BJ (cell line): ENCODE measurements at regions of chr1 and their contacts with region 1.

Region 1: GRCh38 chr1:15100121-15100874 is 53.2 kb upstream of the TMEM51 start:
- DNase-seq: no peak
- H3K4me3 ChIP-seq: no peak overlapping the region
- H3K27me3 ChIP-seq: no peaks in the 10 kb centered on the region
- CTCF ChIP-seq: peak; percentile 90

Region 2: DNA sequence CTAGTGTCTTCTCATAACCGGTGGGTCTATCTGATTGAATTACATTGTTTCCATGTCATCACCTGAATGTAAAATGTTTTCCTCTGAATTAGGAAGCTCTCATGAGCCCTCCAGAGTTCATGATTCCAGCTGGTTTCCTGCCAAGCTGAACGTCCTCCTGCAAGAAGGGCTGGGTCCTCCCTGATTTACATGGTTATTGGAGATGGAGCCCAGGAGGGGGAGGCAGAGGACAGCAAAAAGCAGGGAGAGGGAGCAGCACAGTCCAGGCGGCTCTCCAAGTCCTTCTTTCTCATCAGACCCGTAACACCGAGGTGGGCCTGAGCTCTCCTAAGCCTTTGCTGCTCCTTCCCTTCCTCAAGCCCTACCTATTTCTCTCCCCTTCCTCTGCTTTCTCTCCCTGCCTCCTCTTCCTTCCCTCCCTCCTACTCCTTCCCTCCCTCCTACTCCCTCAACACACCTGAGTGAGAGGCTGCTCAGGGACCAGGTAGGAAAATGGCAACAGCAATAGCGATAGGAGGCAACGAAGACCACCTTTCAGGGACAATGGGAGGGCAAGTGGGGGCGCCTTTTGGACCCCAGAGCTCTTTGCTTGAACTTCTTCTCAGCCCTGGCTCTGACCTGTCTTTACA is 1134.4 kb before region 1 on chr1:
- CTCF ChIA-PET with region 1: interaction called, 10 read pairs
- POLR2A ChIA-PET with region 1: no interaction called
- DNase-seq: no peak
- H3K4me3 ChIP-seq: no peak overlapping the region
- H3K27me3 ChIP-seq: no peaks in the 10 kb centered on the region
- CTCF ChIP-seq: peak; percentile 36

Region 3: DNA sequence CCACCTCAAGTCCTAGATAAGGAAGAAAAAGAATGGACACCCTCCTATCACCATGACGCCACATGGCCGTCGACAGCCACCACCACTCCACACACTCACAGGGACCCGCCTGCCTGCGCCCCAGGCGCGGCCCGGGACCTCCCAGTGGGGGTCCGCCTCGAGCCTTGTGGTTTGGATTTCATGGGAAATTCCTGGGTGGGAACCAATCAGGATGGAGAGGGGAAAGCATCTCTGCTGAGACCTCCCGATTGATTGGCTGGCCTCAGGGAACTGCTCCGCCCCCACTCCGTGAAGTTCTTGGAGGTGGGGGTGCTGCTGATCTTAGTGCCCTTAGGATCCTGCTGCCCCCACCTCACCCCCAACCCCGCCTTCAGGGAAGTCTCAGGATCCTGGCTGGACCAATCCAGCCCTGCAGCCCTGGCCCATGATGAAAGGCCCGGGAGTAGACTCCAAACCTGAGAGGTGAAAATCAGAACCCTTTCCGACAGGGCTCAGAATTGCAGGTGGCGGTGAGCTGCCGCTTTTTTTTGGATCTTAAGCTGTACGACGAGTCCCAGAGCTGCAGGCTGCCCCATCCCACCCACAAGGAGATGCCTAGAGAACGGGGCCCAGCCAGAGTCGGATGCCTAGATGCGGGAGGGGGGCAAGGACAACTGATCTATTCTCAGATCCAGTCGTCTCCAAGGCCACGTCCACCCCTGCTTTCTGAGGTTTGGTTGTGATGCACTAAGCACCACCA is 24.2 kb after region 1 on chr1:
- CTCF ChIA-PET with region 1: no interaction called
- POLR2A ChIA-PET with region 1: no interaction called
- DNase-seq: no peak
- H3K4me3 ChIP-seq: no peak overlapping the region
- H3K27me3 ChIP-seq: no peaks in the 10 kb centered on the region
- CTCF ChIP-seq: no peak